ENCODE measurements at regions of chr4 and their contacts with region 1.

Region 1: DNA sequence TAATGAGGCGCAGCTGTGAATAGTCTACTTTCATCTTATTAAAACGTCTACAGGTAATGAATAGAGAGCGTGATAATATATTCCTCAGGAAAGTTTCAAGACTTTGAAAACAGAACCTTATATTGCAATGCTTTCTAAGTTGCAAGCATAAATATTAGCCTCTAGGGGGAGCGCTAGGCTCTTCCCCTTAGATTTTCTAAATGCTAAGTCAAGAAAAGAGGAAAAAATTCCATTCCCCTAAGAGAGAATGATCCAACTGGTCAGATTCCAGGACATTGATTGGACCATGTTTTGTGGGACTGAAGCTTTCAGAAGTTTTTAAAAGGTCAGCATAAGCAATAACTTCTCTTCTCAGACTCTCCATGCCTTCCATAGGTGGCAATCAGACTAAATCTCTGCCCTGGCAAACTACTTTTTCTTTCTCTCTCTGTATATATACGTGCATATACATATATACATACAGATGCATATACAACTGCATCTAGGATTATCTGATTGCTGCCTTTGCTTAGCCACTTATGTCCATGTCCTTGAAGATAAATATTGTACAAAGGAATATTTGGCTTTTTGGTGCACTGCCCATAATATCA is 492.9 kb downstream of the INPP4B start:
- DNase-seq: peak; percentile 68
- H3K4me3 ChIP-seq: no peak overlapping the region
- H3K27ac ChIP-seq: no peak overlapping the region
- H3K4me1 ChIP-seq: peaks cover 21% of the 10 kb centered on the region
- H3K27me3 ChIP-seq: no peaks in the 10 kb centered on the region
- CTCF ChIP-seq: peak; percentile 60 to 66
- POLR2A ChIP-seq: no peak

Region 2: DNA sequence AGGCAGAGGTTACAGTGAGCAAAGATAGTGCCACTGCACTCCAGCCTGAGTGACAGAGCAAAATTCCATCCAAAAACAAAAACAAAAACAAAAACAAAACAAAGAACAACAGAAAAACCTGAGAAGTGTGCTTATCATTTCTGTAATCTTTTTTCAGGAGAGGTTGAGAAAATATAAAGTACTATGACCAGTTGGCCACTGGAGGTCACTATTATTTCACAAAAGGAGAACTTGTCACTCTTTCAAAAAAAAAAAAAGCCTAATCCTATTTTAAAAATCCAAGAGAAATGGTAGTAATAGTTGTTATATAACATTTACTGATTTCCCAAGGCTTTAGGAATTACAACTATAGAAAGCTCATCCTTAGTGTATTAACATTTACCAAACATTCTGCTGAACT is 1195.0 kb before region 1 on chr4:
- CTCF ChIA-PET with region 1: interaction called, 3 read pairs
- POLR2A ChIA-PET with region 1: no interaction called
- dilution Hi-C with region 1: no loop called
- intact Hi-C with region 1: loop called (anchors 2 kb)
- DNase-seq: peak; percentile 37
- H3K4me3 ChIP-seq: no peak overlapping the region
- H3K27ac ChIP-seq: no peak overlapping the region
- H3K4me1 ChIP-seq: no peaks in the 10 kb centered on the region
- H3K27me3 ChIP-seq: peaks cover under 1 to 3% of the 10 kb centered on the region in 2 experiments
- CTCF ChIP-seq: peak in 1 of 2 donors; percentile 28
- POLR2A ChIP-seq: no peak

Region 3: GRCh38 chr4:141713771-141714445 is 639.3 kb before region 1 on chr4:
- CTCF ChIA-PET with region 1: no interaction called
- POLR2A ChIA-PET with region 1: no interaction called
- dilution Hi-C with region 1: no loop called
- intact Hi-C with region 1: no loop called
- DNase-seq: peak; percentile 34
- H3K4me3 ChIP-seq: no peak overlapping the region
- H3K27ac ChIP-seq: no peak overlapping the region
- H3K4me1 ChIP-seq: peaks cover 4% of the 10 kb centered on the region
- H3K27me3 ChIP-seq: no peaks in the 10 kb centered on the region
- CTCF ChIP-seq: no peak
- POLR2A ChIP-seq: no peak

Region 4: GRCh38 chr4:142095886-142096605 is 257.2 kb before region 1 on chr4:
- CTCF ChIA-PET with region 1: no interaction called
- POLR2A ChIA-PET with region 1: no interaction called
- dilution Hi-C with region 1: no loop called
- intact Hi-C with region 1: loop called (anchors 1 kb)
- DNase-seq: peak; percentile 94
- H3K4me3 ChIP-seq: no peak overlapping the region
- H3K27ac ChIP-seq: peak overlapping the region; percentile 68
- H3K4me1 ChIP-seq: peaks cover 28% of the 10 kb centered on the region
- H3K27me3 ChIP-seq: no peaks in the 10 kb centered on the region
- CTCF ChIP-seq: no peak
- POLR2A ChIP-seq: no peak

Region 5: GRCh38 chr4:142366769-142367181 is 13.5 kb after region 1 on chr4:
- CTCF ChIA-PET with region 1: interaction called, 8 read pairs
- POLR2A ChIA-PET with region 1: no interaction called
- dilution Hi-C with region 1: no loop called
- intact Hi-C with region 1: loop called (anchors 1 kb)
- DNase-seq: no peak
- H3K4me3 ChIP-seq: no peak overlapping the region
- H3K27ac ChIP-seq: no peak overlapping the region
- H3K4me1 ChIP-seq: peaks cover 15% of the 10 kb centered on the region
- H3K27me3 ChIP-seq: no peaks in the 10 kb centered on the region
- CTCF ChIP-seq: no peak
- POLR2A ChIP-seq: no peak

Region 6: DNA sequence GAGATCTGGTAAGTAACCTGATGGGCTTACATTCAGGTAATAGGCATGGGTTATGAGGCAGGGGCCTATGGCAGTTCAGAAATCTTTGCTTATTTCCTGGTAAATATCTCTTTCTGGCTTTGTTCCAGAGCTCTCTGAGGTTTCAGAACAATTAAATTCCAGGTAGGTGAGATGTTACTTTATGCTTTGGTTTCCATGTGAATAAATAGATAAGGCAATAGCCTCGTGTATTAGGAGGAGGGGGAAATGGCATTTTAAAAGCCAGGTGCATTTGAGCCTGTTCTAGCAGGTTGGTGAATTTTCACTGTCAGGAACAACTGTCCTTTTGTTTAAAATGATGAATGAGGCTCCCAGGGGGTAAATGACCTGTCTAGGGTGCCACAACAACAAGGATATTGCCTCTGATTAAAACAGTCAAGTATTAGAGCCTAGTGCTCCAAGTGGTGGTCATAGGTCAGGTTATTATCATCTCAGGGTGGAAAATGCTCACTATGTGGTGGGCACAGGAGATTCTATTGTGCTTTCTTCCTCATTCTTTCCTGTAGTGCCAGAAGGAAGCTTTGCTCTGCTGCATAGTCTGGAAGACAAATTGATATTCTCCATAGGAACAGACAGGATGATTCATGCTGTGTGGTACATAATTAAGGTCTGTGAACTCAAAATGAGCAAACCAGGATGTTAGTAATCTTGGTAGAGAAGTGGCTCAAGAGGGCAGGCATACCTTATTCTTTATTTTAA is 196.7 kb after region 1 on chr4:
- CTCF ChIA-PET with region 1: interaction called, 3 read pairs
- POLR2A ChIA-PET with region 1: no interaction called
- dilution Hi-C with region 1: no loop called
- intact Hi-C with region 1: loop called (anchors 1 kb)
- DNase-seq: peak; percentile 88
- H3K4me3 ChIP-seq: no peak overlapping the region
- H3K27ac ChIP-seq: peak overlapping the region; percentile 78
- H3K4me1 ChIP-seq: peaks cover 12% of the 10 kb centered on the region
- H3K27me3 ChIP-seq: no peaks in the 10 kb centered on the region
- CTCF ChIP-seq: no peak
- POLR2A ChIP-seq: no peak

Region 7: GRCh38 chr4:142840516-142841123 is 487.4 kb after region 1 on chr4:
- CTCF ChIA-PET with region 1: interaction called, 3 read pairs
- POLR2A ChIA-PET with region 1: no interaction called
- dilution Hi-C with region 1: no loop called
- intact Hi-C with region 1: loop called (anchors 1 kb)
- DNase-seq: peak; percentile 62
- H3K4me3 ChIP-seq: no peak overlapping the region
- H3K27ac ChIP-seq: no peak overlapping the region
- H3K4me1 ChIP-seq: no peaks in the 10 kb centered on the region
- H3K27me3 ChIP-seq: peaks cover 0 to 6% of the 10 kb centered on the region in 2 experiments
- CTCF ChIP-seq: peak; percentile 47
- POLR2A ChIP-seq: no peak

Region 8: GRCh38 chr4:143207557-143207956 is 854.3 kb after region 1 on chr4:
- CTCF ChIA-PET with region 1: no interaction called
- POLR2A ChIA-PET with region 1: no interaction called
- dilution Hi-C with region 1: no loop called
- intact Hi-C with region 1: no loop called
- DNase-seq: peak; percentile 27
- H3K4me3 ChIP-seq: no peak overlapping the region
- H3K27ac ChIP-seq: no peak overlapping the region
- H3K4me1 ChIP-seq: no peaks in the 10 kb centered on the region
- H3K27me3 ChIP-seq: no peaks in the 10 kb centered on the region
- CTCF ChIP-seq: peak in 1 of 2 donors; percentile 12
- POLR2A ChIP-seq: no peak

Measured in endothelial cell of umbilical vein (primary cell).